Activated CD8-positive, alpha-beta memory T cell treated with anti-CD3 and anti-CD28 coated beads, Interleukin-2, amount 10 ng/mL, durations not matched to agents 7 days and 5 days (primary cell): ENCODE measurements at regions of chr13 and their contacts with region 1.

Region 1: DNA sequence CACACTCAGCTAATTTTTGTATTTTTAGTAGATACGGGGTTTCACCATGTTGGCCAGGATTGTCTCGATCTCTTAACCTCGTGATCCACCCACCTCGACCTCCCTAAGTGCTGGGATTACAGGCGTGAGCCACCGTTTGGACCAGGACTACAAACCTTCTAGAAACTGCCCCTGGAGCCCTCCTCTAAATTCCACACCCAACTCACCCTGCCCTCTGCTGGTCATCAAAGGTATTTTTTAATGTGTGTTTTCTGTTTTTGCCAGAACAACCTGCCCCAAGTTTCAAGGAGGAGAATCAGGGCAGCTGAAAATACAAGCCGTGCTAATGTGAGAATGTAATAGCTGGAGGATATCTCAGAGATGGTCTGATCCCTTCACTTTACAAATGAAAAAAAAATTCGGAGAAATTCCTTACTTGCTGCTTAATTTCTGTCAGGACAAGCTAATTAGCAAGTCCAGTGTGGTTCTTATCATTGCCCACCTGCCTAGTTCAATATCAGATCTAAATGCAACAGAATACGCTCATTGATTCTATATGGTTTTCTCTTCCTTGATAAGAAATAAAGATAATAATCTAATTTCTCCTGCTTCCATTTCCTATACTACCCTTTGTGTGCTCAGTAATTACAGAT is 4.1 kb downstream of the ATP8A2 start:
- DNase-seq: no peak
- ATAC-seq: peak; percentile 38
- H3K4me3 Mint-ChIP-seq: no peak overlapping the region
- H3K27ac Mint-ChIP-seq: no peak overlapping the region
- H3K4me1 Mint-ChIP-seq: peaks cover 16% of the 10 kb centered on the region
- H3K27me3 Mint-ChIP-seq: peaks cover 59% of the 10 kb centered on the region

Region 2: DNA sequence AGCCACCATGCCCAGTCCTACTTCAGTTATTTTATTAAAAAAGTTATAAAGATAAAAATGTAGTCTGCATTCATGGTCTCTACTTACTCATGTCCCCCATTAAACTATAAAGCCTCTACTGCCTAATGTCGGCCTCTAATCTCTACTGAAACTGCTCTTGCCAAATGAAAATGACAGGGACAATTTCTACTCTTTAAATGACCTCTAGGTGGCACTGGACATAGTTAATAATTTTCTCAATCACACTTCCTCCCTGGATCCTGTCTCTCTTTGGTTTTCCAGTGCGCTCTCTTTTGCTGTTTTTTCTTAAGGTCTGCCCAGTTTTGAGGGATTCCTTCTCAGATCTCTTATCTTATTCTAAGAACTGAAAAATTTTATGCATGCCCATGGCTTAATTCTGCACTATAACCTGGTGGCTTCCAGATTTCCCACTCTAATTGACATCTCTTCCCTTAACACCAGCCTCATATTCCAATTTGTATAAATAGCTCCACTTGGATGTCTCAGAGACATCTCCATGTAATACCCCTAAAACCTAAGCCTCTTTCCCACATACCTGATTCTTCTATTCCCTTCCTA is 142.8 kb before region 1 on chr13:
- CTCF ChIA-PET with region 1: interaction called, 10 read pairs
- DNase-seq: no peak
- ATAC-seq: no peak
- H3K4me3 Mint-ChIP-seq: no peak overlapping the region
- H3K27ac Mint-ChIP-seq: no peak overlapping the region
- H3K4me1 Mint-ChIP-seq: peaks cover 3% of the 10 kb centered on the region
- H3K27me3 Mint-ChIP-seq: peaks cover 6% of the 10 kb centered on the region